Posterior vena cava (tissue), 2 donors: ENCODE measurements at regions of chr5 and their contacts with region 1.

Region 1: GRCh38 chr5:124755041-124755964 is 8.9 kb upstream of the ZNF608 start:
- DNase-seq: no peak

Region 2: GRCh38 chr5:125011014-125011413 is 255.7 kb after region 1 on chr5:
- intact Hi-C with region 1: loop called in 1 of 2 experiments (anchors 5 kb)
- DNase-seq: no peak